Right lobe of liver (tissue), 6 donors: ENCODE measurements at regions of chr14 and their contacts with region 1.

Region 1: GRCh38 chr14:56797569-56798446 is 12.5 kb downstream of the OTX2 start:
- DNase-seq: peak in 1 of 3 donors; percentile 26
- ATAC-seq: peak; percentile 39 to 49 (median 46)
- H3K4me3 ChIP-seq: no peak overlapping the region
- H3K27ac ChIP-seq: no peak overlapping the region
- H3K4me1 ChIP-seq: peaks cover 0 to 9% (median 0%) of the 10 kb centered on the region in 4 donors
- H3K27me3 ChIP-seq: peaks cover 7 to 49% of the 10 kb centered on the region in 2 donors
- CTCF ChIP-seq: no peak
- POLR2A ChIP-seq: no peak

Region 2: GRCh38 chr14:57049848-57050247 is 252.0 kb after region 1 on chr14:
- intact Hi-C with region 1: loop called in 1 of 2 experiments (anchors 5 kb)
- DNase-seq: no peak
- ATAC-seq: no peak
- H3K4me3 ChIP-seq: no peak overlapping the region
- H3K27ac ChIP-seq: no peak overlapping the region
- H3K4me1 ChIP-seq: no peaks in the 10 kb centered on the region
- H3K27me3 ChIP-seq: no peaks in the 10 kb centered on the region
- CTCF ChIP-seq: no peak
- POLR2A ChIP-seq: no peak